ENCODE measurements at regions of chr5 and their contacts with region 1.

Region 1: GRCh38 chr5:120502531-120502930 is 38.4 kb downstream of the PRR16 start:
- DNase-seq: no peak
- ATAC-seq: no peak
- H3K4me3 ChIP-seq: no peak overlapping the region
- H3K27ac ChIP-seq: no peak overlapping the region
- H3K4me1 ChIP-seq: no peaks in the 10 kb centered on the region
- H3K27me3 ChIP-seq: no peaks in the 10 kb centered on the region
- CTCF ChIP-seq: no peak

Region 2: DNA sequence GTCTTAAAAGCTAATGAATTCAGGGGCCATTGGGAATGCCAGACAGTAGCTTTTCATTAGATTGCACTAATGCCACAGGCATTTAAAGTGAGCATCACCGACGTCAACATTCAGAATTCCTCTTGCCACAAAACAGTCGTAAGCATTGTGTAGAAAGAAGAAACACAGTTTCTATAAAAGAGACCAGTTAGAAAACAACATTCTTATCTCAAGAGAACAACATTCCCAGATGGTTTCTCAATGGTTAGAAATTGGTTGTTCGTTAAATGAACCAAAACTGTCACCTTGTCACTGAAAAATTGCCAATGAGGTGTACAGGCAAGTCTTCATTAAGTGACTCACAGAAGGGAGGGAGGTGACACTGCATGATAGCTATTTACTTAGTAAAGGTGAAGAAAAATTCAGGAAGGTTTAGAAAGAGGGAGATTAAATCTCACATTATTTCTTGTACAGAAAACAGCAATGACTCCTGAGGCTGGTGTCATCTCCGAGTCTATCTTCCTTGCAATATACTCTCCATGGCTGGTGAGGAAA is 439.9 kb before region 1 on chr5:
- CTCF ChIA-PET with region 1: no interaction called
- POLR2A ChIA-PET with region 1: interaction called, 11 read pairs
- in situ Hi-C with region 1: no loop called
- intact Hi-C with region 1: no loop called
- DNase-seq: no peak
- ATAC-seq: no peak
- H3K4me3 ChIP-seq: no peak overlapping the region
- H3K27ac ChIP-seq: no peak overlapping the region
- H3K4me1 ChIP-seq: no peaks in the 10 kb centered on the region
- H3K27me3 ChIP-seq: no peaks in the 10 kb centered on the region
- CTCF ChIP-seq: no peak

Region 3: GRCh38 chr5:120767178-120767820 is 264.8 kb after region 1 on chr5:
- CTCF ChIA-PET with region 1: no interaction called
- POLR2A ChIA-PET with region 1: no interaction called
- in situ Hi-C with region 1: no loop called
- intact Hi-C with region 1: no loop called
- DNase-seq: no peak
- ATAC-seq: no peak
- H3K4me3 ChIP-seq: no peak overlapping the region
- H3K27ac ChIP-seq: no peak overlapping the region
- H3K4me1 ChIP-seq: no peaks in the 10 kb centered on the region
- H3K27me3 ChIP-seq: no peaks in the 10 kb centered on the region
- CTCF ChIP-seq: no peak

Measured in Panc1 (cell line).